ENCODE measurements at regions of chr2 and their contacts with region 1.

Region 1: DNA sequence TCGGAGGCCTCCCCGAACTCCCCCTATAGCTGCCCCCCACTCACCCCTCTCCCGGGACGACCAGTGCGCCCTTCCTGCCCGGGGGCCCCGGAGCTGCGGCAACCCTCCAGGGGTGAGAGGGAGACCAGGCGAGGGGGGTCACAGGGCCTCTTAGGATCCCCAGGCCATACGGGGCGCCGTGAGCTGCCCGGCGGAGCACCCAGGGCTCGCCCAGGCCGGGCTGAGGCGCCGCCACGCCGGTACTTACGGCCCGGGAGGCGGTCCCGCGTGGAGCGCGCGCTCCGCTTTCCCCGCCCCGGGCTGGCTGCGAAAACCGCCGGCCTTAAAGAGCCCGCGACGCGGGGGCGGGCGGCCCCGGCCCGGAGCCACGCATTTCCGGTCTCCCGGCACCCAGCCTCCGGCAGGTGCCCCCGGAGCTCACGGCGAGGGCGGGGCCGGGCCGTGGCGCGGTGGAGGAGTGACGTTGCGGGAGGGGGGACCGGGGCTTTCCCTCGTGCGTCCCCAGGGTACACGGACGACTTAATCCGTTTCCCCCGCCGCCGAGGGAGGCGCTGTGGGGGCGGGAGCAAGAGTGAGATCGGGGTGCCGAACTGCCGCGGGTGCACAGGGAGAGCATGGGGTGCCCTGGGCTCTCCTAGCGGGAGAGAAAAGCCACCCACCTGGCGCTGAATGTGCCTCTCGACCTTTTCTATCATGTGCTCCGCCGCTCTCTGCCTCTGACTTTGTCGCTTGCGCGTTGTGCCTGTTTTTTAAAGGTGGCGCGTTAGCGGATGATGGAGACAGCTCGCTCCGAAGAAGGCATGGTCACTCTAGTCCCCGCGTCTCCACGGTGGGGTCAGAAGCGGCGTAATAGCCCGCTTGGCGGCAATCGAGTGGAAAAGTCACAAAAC is at the start of gene METTL21A:
- DNase-seq: no peak
- ATAC-seq: peak; percentile 86
- H3K4me3 ChIP-seq: peak within 1 kb of the TSS; percentile 77 to 91
- H3K27ac ChIP-seq: peak within 1 kb of the TSS; percentile 81
- H3K4me1 ChIP-seq: peaks cover 7% of the 10 kb centered on the region; the same call in 1 of the 2 replicates
- H3K27me3 ChIP-seq: no peaks in the 10 kb centered on the region
- CTCF ChIP-seq: no peak
- total RNA-seq, gene METTL21A: 20.9 TPM

Region 2: GRCh38 chr2:207529330-207530159 is 95.7 kb before region 1 on chr2 and contains the start of gene CREB1:
- CTCF ChIA-PET with region 1: no interaction called
- POLR2A ChIA-PET with region 1: no interaction called
- in situ Hi-C with region 1: no loop called
- intact Hi-C with region 1: loop called (anchors 10 kb)
- DNase-seq: peak; percentile 87
- ATAC-seq: peak; percentile 94
- H3K4me3 ChIP-seq: peak within 1 kb of the TSS; percentile 87 to 90
- H3K27ac ChIP-seq: peak within 1 kb of the TSS; percentile 98
- H3K4me1 ChIP-seq: peaks cover 20% of the 10 kb centered on the region
- H3K27me3 ChIP-seq: no peaks in the 10 kb centered on the region
- CTCF ChIP-seq: no peak; the same call in none of the 2 replicates
- total RNA-seq, gene CREB1: 31.1 TPM

Region 3: GRCh38 chr2:207710814-207711740 is 85.8 kb after region 1 on chr2 and contains the start of gene CCNYL1:
- CTCF ChIA-PET with region 1: interaction called, 13 read pairs
- POLR2A ChIA-PET with region 1: no interaction called
- in situ Hi-C with region 1: no loop called
- intact Hi-C with region 1: loop called (anchors 5 kb)
- DNase-seq: peak; percentile 88
- ATAC-seq: peak; percentile 98
- H3K4me3 ChIP-seq: peak within 1 kb of the TSS; percentile 70 to 88
- H3K27ac ChIP-seq: peak within 1 kb of the TSS; percentile 91
- H3K4me1 ChIP-seq: peaks cover 7% of the 10 kb centered on the region
- H3K27me3 ChIP-seq: no peaks in the 10 kb centered on the region
- CTCF ChIP-seq: no peak
- total RNA-seq, gene CCNYL1: 31.4 TPM

Region 4: GRCh38 chr2:207734264-207734635 is 109.0 kb after region 1 on chr2:
- CTCF ChIA-PET with region 1: interaction called, 4 read pairs
- POLR2A ChIA-PET with region 1: interaction called, 3 read pairs
- in situ Hi-C with region 1: no loop called
- intact Hi-C with region 1: loop called (anchors 5 kb)
- DNase-seq: no peak
- ATAC-seq: peak; percentile 89
- H3K4me3 ChIP-seq: no peak overlapping the region
- H3K27ac ChIP-seq: no peak overlapping the region
- H3K4me1 ChIP-seq: no peaks in the 10 kb centered on the region
- H3K27me3 ChIP-seq: no peaks in the 10 kb centered on the region
- CTCF ChIP-seq: peak; percentile 72; the same call in 1 of the 2 replicates

Region 5: GRCh38 chr2:207792244-207792785 is 167.1 kb after region 1 on chr2:
- CTCF ChIA-PET with region 1: no interaction called
- POLR2A ChIA-PET with region 1: no interaction called
- in situ Hi-C with region 1: no loop called
- intact Hi-C with region 1: no loop called
- DNase-seq: no peak
- ATAC-seq: peak; percentile 73
- H3K4me3 ChIP-seq: no peak overlapping the region
- H3K27ac ChIP-seq: no peak overlapping the region
- H3K4me1 ChIP-seq: no peaks in the 10 kb centered on the region
- H3K27me3 ChIP-seq: no peaks in the 10 kb centered on the region
- CTCF ChIP-seq: no peak

Measured in Panc1 (cell line).